Sciatic nerve (tissue), 2 donors: ENCODE measurements at regions of chrX and their contacts with region 1.

Region 1: GRCh38 chrX:46173159-46173558 is 372.1 kb downstream of the ZNF674 start:
- DNase-seq: no peak
- ATAC-seq: no peak

Region 2: GRCh38 chrX:46125111-46125510 is 48.0 kb before region 1 on chrX:
- intact Hi-C with region 1: loop called (anchors 2 kb)
- DNase-seq: no peak
- ATAC-seq: no peak

Region 3: GRCh38 chrX:47927212-47927611 is 1754.1 kb after region 1 on chrX:
- intact Hi-C with region 1: no loop called
- DNase-seq: no peak
- ATAC-seq: no peak